GM13976 (cell line): ENCODE measurements at regions of chr6 and their contacts with region 1.

Region 1: GRCh38 chr6:31958741-31959739 is at the starts of genes NELFE and SKIC2:
- DNase-seq: peak; percentile 100
- CTCF ChIP-seq: no peak

Region 2: DNA sequence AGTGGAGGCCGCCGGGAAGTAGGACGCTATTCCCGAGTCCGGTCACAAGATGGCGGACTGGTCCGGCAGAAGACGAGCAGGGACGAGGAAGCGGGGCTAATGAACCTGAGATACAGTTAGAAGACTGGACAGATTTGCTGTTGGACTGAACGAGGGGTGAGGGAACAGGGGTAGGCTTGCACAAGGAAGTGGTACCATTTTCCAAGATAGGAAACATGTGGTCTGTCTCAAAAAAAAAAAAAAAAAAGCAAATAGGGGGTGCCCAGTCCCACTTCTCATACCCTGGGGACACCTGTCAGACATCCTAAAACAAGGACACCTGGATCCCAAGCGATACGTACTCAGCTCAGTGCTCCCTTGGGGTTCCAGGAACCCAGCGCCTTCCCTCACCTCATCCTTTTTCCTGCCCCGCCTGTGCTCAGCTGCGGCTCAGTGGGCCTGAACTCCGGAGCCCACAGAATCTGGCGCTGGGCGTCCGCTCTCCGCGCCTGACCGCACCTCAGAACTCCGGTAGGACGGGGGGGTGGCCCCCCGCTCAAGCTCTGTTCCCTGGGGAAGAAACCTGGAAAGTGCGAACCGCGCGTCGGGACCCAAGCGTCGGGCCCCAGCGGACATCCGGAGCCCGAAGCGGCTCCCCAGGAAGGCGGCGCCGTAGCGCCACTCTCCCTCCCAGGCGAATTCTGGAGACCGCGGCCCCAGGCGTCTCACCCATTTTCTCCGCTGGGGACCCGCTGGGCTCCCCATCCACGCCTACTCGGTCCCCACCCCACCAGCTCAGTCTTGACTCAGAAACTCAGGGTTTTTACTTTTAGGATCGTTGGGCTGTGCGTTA is 278.0 kb before region 1 on chr6 and contains the start of gene LY6G5C:
- in situ Hi-C with region 1: loop called (anchors 10 kb)
- DNase-seq: peak; percentile 86
- CTCF ChIP-seq: peak; percentile 79

Region 3: DNA sequence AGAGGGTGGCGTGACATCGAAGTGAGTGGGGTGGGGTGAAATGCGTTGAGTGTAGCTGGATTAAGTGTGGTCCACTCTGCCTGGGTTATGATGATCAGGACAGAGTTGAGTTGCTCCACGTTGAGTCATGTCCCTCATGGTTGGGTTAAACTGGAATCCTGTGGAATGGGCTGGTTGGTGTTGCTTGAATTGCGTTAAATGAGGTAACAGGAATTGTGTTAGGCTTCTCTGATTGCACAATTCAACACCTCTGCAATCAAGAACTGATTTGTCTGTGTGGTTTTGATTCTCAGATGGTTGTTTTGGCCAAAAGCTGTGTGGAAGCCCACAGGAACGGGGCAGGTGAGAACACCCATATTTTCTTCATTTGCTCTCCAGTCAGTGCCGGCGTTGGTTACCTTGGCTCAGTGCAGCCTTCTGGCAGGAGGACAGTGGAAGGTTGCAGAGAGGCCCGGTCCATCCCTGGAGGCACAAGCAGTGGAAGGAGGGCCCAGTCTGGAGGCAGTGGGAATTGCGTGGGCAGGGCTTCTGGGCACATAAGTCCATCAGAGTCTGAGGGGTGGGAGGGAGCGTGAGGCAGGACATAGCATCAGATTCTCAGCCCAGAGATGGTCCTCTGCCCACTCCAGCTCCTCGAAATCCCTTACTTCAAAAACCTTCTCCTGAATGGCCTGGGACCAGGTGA is 253.2 kb after region 1 on chr6:
- in situ Hi-C with region 1: no loop called
- DNase-seq: no peak
- CTCF ChIP-seq: no peak